GM23248 (cell line): ENCODE measurements at regions of chr10 and their contacts with region 1.

Region 1: DNA sequence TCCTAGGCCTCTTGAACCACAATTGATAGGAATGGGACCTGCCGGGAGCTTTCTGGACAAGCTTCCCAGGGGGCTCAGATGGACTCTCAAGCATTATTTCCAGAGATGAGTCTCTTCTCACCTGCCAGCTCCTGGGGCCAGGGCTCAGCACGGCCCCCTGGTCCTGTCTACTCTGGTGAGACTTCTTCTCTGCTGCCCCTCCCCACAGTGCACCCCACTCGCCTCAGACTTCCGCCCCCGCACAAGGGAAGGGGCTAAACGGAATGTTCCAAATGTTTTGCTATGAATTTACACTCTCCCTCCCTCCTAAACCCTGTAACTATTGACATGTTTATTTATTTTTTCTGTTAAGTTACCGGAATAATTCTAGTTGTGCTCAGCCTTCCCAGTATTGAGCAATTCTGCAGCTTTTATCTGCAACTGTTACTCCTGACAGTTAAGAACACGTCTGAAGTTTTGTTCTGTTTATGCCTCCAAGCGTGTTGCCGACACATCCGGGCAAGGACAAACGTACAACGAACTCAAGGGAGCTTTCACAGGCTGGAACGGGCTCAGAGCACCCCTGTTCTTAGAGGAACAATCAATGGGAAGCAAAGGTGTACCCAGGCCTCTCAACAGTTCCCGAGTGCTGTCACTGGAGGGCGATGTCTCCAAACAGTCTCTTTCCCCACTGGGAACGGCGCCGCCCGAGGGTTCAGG is 55.2 kb downstream of the FHIP2A start:
- DNase-seq: peak; percentile 82
- H3K4me3 ChIP-seq: peak overlapping the region; percentile 25; the same call in 1 of the 2 replicates
- H3K27ac ChIP-seq: no peak overlapping the region
- H3K4me1 ChIP-seq: peaks cover 11% of the 10 kb centered on the region
- H3K27me3 ChIP-seq: no peaks in the 10 kb centered on the region

Region 2: GRCh38 chr10:115129752-115130151 is 253.0 kb after region 1 on chr10:
- in situ Hi-C with region 1: loop called (anchors 10 kb)
- DNase-seq: peak; percentile 49
- H3K4me3 ChIP-seq: no peak overlapping the region
- H3K27ac ChIP-seq: no peak overlapping the region
- H3K4me1 ChIP-seq: no peaks in the 10 kb centered on the region
- H3K27me3 ChIP-seq: no peaks in the 10 kb centered on the region